Activated CD4-positive, alpha-beta memory T cell treated with anti-CD3 and anti-CD28 coated beads, Interleukin-2, amount 10 ng/mL, durations not matched to agents 7 days and 5 days (primary cell): ENCODE measurements at regions of chr14 and their contacts with region 1.

Region 1: GRCh38 chr14:103104654-103105452 is 10.3 kb downstream of the EXOC3L4 start:
- DNase-seq: peak; percentile 69
- H3K4me3 Mint-ChIP-seq: no peak overlapping the region
- H3K27ac Mint-ChIP-seq: no peak overlapping the region
- H3K4me1 Mint-ChIP-seq: peaks cover 7% of the 10 kb centered on the region
- H3K27me3 Mint-ChIP-seq: peaks cover 31% of the 10 kb centered on the region

Region 2: DNA sequence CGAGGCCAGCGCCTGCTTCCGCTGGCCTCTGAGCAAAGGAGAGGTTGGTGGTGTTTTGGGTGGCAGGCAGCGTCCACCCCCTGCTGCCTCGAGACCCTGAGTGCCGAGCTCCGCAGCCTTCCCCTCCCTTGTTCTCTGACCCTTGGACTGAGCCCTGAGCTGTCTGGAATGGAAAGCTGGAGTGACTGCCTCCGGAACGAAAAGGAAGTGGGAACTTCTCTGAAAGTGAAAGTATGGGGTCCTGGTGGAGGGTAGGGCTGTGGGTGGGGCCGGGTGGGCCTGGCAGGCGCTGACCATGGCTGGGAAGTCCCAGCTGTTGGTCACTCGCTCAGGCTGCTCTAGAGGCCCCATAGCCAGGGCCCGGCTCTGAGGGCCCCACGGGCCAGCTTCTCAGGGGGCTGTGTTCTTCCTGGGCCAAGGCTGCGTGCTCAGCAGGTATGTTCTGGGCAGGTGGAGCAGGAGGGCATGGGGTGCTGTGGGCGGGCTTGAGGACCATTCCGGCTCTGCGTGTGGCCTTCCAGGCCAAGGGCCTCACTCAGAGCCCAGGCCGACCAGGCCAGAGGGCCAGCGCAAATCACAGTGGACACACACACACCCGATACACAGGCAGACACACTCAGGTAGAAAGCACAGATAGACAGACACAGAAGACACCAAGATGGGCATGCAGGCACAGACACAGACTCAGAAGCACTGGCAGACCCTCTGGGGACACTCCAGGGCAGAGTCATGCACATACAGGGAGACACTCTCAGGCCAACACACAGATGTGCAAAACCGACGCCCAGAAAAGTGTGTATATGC is 10.2 kb before region 1 on chr14 and contains the start of gene EXOC3L4:
- CTCF ChIA-PET with region 1: interaction called, 25 read pairs
- POLR2A ChIA-PET with region 1: no interaction called
- DNase-seq: no peak
- H3K4me3 Mint-ChIP-seq: no peak within 1 kb of the TSS
- H3K27ac Mint-ChIP-seq: no peak within 1 kb of the TSS
- H3K4me1 Mint-ChIP-seq: peaks cover 7% of the 10 kb centered on the region
- H3K27me3 Mint-ChIP-seq: no peaks in the 10 kb centered on the region
- total RNA-seq, gene EXOC3L4: not detected

Region 3: DNA sequence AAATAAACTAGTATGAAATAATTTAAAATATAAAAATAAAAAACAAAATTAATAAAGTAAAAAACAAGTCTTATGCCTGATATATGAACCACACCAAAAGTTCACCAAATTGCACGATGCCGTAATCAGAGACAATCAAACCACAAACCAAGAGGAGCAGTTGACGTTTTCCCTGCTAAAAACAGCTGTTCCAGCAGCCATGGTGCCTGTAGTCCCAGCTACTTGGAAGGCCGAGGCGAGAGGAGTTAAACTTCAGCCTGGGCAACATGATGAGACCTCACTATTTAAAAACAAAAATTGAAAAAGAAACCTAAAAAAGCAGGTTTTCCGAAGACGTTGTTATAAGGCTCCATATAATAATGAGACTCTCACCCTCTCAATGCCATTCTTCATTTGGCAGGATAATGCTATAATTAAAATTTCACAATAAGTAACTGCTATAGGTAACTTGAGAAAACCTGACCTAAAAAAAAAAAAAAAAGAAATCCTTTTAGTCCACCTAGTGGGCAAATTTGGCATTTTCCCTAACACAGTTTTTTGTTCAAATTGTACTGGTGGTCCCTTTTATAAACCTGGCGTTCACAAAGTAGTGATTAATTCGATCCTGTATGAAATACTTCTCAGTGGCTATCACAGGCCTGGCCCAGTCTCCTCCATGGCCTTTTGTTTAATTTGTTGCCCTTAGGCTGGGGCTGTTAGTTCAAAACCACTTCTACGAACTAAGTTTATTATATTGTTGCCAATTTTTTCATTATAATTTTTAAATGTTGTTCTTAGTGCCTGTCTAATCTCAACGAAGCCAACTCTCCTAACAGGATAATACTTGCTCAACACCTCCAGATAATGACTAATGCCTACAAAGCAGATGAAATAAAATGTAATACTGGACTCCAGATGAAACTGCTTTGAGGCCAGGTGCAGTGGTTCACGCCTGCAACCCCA is 80.5 kb after region 1 on chr14:
- CTCF ChIA-PET with region 1: interaction called, 18 read pairs
- POLR2A ChIA-PET with region 1: no interaction called
- DNase-seq: no peak
- H3K4me3 Mint-ChIP-seq: no peak overlapping the region
- H3K27ac Mint-ChIP-seq: no peak overlapping the region
- H3K4me1 Mint-ChIP-seq: peaks cover 4% of the 10 kb centered on the region
- H3K27me3 Mint-ChIP-seq: peaks cover 46% of the 10 kb centered on the region

Region 4: GRCh38 chr14:103292426-103293374 is 187.8 kb after region 1 on chr14:
- CTCF ChIA-PET with region 1: interaction called, 22 read pairs
- POLR2A ChIA-PET with region 1: no interaction called
- DNase-seq: peak; percentile 76
- H3K4me3 Mint-ChIP-seq: no peak overlapping the region
- H3K27ac Mint-ChIP-seq: no peak overlapping the region
- H3K4me1 Mint-ChIP-seq: no peaks in the 10 kb centered on the region
- H3K27me3 Mint-ChIP-seq: peaks cover 13% of the 10 kb centered on the region